Ovary (tissue), 10 donors: ENCODE measurements at regions of chr22 and their contacts with region 1.

Region 1: DNA sequence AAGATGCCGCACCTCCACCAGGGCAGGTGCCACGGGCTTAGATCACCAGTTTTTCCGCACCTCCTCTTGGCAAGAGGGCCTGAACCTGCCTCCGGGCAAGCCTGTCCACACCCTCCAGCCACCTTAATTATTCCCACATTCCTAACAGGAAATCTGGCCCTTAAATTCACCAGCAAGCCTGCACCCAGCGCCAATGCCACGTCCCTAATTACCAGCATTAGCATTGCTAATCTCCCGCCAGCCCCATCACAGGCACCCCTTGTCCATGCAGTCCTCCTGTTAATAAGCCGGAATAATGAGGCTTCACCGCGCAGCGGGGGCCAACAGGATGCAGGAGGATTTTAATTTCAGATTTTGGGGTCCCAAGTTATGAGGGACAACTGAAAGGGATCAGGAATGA is 69.7 kb downstream of the PHF21B start:
- DNase-seq: no peak
- H3K4me3 ChIP-seq: no peak overlapping the region
- H3K27ac ChIP-seq: no peak overlapping the region
- H3K4me1 ChIP-seq: no peaks in the 10 kb centered on the region
- H3K27me3 ChIP-seq: no peaks in the 10 kb centered on the region
- CTCF ChIP-seq: no peak
- EP300 ChIP-seq: no peak
- POLR2A ChIP-seq: no peak

Region 2: DNA sequence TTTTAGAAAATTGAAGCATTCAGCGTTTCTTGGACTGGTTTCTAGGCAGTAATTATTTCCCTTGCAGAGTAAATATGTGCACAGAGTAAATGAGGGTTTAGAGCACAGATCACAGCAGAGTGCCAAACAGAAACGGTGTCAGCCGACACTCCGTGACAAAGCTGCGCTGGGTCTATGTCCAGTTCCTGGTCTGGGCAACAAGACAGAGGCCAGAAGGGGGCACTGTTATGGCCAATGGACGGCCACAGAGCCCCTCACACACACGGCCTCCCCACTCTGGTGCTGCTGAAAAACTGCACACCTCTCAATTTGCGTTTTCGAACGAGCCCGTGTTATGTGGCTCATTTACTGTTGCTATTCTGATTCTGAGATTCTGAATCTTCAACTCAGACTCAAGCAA is 1347.7 kb before region 1 on chr22:
- intact Hi-C with region 1: loop called in 1 of 4 experiments (anchors 5 kb)
- DNase-seq: no peak
- H3K4me3 ChIP-seq: no peak overlapping the region
- H3K27ac ChIP-seq: no peak overlapping the region
- H3K4me1 ChIP-seq: no peaks in the 10 kb centered on the region
- H3K27me3 ChIP-seq: no peaks in the 10 kb centered on the region
- CTCF ChIP-seq: no peak
- EP300 ChIP-seq: no peak
- POLR2A ChIP-seq: no peak

Region 3: DNA sequence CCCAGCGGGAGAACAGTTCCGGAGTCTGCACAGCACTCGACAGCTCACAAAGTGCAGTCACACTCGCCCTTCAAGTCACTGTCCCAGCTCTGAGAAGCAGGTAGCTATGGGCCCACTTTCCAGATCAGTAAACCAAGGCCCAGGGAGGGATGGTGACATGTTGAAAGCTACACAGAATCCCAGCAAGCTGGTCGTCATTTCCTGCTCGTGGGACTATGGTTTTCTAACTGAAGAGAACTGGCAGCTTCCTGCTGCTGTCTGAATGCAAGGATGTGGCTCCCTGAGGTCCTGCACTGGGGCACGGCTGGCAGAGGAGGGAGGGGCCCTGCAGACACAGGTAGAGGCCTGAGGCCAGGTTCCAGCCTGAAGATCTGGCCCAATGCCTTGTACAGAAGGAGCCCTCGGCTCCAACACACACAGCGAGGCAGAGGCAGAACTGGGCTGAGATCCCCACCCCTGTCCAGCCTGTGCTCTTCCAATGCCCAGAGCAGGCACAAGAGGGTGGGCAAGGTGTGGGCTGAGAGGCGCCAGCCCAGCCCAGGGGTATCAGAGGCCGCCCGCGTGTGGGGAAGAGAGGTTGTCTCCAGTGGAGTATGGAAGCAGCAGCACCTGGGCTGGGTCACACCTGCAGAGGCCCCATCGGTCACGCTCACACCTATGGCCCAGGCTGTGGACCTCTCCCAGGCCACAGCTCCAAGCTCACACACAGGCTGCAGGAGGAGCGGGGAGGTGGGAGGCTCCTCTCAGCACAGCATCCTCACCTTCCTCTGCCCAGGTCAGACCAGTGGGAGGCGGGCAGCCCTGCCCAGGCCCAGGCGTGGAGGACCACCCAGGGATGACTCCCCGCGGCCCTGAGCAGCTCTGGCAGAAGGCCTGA is 49.5 kb before region 1 on chr22:
- intact Hi-C with region 1: no loop called
- DNase-seq: peak in 1 of 5 donors; percentile 26
- H3K4me3 ChIP-seq: no peak overlapping the region
- H3K27ac ChIP-seq: no peak overlapping the region
- H3K4me1 ChIP-seq: no peaks in the 10 kb centered on the region
- H3K27me3 ChIP-seq: no peaks in the 10 kb centered on the region
- CTCF ChIP-seq: no peak
- EP300 ChIP-seq: no peak
- POLR2A ChIP-seq: no peak

Region 4: GRCh38 chr22:44975427-44976262 is 35.5 kb after region 1 on chr22:
- intact Hi-C with region 1: no loop called
- DNase-seq: peak; percentile 73 to 93 (median 87)
- H3K4me3 ChIP-seq: no peak overlapping the region
- H3K27ac ChIP-seq: no peak overlapping the region
- H3K4me1 ChIP-seq: no peaks in the 10 kb centered on the region
- H3K27me3 ChIP-seq: no peaks in the 10 kb centered on the region
- CTCF ChIP-seq: peak; percentile 35 to 56 (median 44)
- EP300 ChIP-seq: no peak
- POLR2A ChIP-seq: no peak